Endothelial cell of umbilical vein (primary cell): ENCODE measurements at regions of chr5 and their contacts with region 1.

Region 1: DNA sequence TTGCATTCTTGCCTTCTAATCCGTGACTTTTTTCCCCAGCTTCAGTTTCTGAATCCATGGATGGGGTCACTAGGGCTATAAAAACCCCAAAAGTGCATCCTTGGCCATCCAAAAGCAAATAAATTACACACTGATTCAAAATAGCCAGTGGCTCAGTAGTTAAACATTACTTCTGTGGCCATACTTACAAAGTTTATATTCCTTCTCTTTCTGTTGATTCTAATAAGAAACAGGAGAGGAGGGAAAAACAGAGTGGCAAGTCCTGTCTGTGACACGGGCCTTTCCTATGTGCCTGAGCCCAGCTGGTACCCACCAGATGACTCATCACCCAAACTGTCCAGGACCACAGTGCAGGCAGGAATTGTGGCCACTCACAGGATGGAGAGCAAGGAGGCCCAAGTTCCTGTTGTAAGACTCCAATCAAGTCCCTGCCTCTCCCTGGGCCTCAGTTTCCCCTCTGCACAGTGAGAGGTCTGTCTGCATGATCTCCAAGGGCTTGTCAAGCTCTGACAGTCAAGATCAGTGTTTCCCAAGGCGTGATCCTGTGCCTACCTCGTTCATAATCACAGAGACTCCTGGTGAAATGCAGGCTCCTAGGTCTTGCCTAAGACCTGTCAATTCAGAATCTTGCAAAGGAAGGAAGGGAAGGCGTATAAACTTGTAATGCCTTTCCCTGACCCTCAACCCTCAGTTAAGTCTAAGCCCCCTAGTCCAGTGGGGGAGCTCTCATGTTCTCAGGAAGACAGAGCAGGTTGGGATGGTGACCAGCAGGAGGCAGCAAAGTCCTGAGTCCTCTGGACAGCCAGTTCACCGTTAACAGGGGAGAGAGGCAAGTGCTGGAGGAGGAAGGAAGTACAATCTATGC is 29.5 kb downstream of the TNIP1 start:
- DNase-seq: peak; percentile 81
- H3K4me3 ChIP-seq: no peak overlapping the region
- H3K27ac ChIP-seq: no peak overlapping the region
- H3K4me1 ChIP-seq: no peaks in the 10 kb centered on the region
- H3K27me3 ChIP-seq: no peaks in the 10 kb centered on the region
- CTCF ChIP-seq: peak; percentile 86 to 91
- POLR2A ChIP-seq: no peak

Region 2: DNA sequence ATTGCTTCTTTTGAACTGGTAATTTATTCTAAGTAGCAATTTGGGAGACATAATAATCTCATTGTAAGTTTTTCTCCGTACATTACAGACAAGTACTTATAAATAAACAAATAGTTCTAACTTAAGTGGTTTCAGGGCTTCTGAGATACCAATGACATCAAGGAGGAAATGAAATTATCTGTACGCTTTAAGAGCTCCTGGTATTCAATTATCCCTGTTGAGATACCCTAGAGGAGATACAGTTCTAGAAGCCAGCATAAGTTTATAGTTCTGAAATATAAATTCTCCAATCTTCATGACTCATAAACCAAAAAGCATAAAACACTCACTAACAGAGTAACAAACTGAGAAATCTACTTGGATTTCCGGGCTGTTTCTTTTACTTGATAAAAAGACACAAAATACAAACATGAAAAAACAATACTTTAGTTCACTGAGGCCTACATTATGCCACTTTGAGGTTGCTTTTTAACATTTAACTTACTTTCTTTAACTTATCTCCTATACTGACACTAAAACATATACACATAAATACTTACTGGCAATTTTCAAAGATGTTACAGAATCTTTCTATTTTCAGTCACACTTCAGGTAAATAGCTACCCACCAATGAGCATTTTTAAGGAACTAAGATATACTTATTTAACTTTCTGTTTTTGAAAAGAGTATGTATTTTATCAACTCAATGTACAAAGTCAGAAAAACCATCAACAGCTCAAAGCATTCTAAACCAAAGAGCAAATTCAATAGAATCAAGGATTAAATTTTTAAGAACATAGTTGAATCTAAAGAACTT is 300.0 kb before region 1 on chr5:
- CTCF ChIA-PET with region 1: no interaction called
- POLR2A ChIA-PET with region 1: no interaction called
- dilution Hi-C with region 1: no loop called
- intact Hi-C with region 1: no loop called
- DNase-seq: no peak
- H3K4me3 ChIP-seq: no peak overlapping the region
- H3K27ac ChIP-seq: no peak overlapping the region
- H3K4me1 ChIP-seq: peaks cover 5% of the 10 kb centered on the region
- H3K27me3 ChIP-seq: no peaks in the 10 kb centered on the region
- CTCF ChIP-seq: no peak
- POLR2A ChIP-seq: no peak

Region 3: GRCh38 chr5:151020304-151021110 is 30.8 kb before region 1 on chr5 and contains the start of gene GPX3:
- CTCF ChIA-PET with region 1: interaction called, 21 read pairs
- POLR2A ChIA-PET with region 1: no interaction called
- dilution Hi-C with region 1: no loop called
- intact Hi-C with region 1: no loop called
- DNase-seq: peak; percentile 69
- H3K4me3 ChIP-seq: peak within 1 kb of the TSS; percentile 48 to 60 (median 57)
- H3K27ac ChIP-seq: no peak within 1 kb of the TSS
- H3K4me1 ChIP-seq: peaks cover 24% of the 10 kb centered on the region
- H3K27me3 ChIP-seq: peaks cover 3 to 9% of the 10 kb centered on the region in 2 experiments
- CTCF ChIP-seq: no peak
- POLR2A ChIP-seq: no peak
- total RNA-seq, gene GPX3: 3.5 and 5.1 TPM in 2 replicates

Region 4: GRCh38 chr5:151063142-151063949 is 12.0 kb after region 1 on chr5:
- CTCF ChIA-PET with region 1: interaction called, 46 read pairs
- POLR2A ChIA-PET with region 1: no interaction called
- dilution Hi-C with region 1: no loop called
- intact Hi-C with region 1: no loop called
- DNase-seq: peak; percentile 83
- H3K4me3 ChIP-seq: no peak overlapping the region
- H3K27ac ChIP-seq: peak overlapping the region; percentile 86
- H3K4me1 ChIP-seq: peaks cover 27% of the 10 kb centered on the region
- H3K27me3 ChIP-seq: no peaks in the 10 kb centered on the region
- CTCF ChIP-seq: no peak
- POLR2A ChIP-seq: no peak

Region 5: GRCh38 chr5:151086905-151087360 is 35.6 kb after region 1 on chr5:
- CTCF ChIA-PET with region 1: interaction called, 30 read pairs
- POLR2A ChIA-PET with region 1: no interaction called
- dilution Hi-C with region 1: no loop called
- intact Hi-C with region 1: no loop called
- DNase-seq: no peak
- H3K4me3 ChIP-seq: no peak overlapping the region
- H3K27ac ChIP-seq: no peak overlapping the region
- H3K4me1 ChIP-seq: peaks cover 26% of the 10 kb centered on the region
- H3K27me3 ChIP-seq: no peaks in the 10 kb centered on the region
- CTCF ChIP-seq: no peak
- POLR2A ChIP-seq: no peak

Region 6: DNA sequence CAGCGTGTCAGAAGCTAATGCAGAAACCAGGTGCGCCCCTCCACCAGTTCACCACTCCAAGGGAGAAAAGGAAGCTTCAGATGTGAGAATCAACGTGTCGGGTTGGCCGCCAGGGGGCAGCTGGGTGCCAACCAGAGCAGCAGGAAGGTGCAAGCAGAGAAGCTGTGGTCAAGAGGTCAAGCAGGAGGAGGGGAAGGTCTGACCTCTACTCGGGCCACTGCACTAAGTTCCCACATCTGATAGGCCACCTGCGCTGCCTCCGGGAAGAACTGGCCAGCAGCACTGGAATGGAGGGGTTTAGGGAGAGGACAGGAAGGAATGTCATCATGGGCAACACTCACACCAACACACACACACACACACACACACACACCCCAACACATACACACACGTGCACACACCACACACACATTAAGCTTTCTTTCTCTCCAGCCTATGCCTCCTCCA is 74.9 kb after region 1 on chr5:
- CTCF ChIA-PET with region 1: interaction called, 17 read pairs
- POLR2A ChIA-PET with region 1: no interaction called
- dilution Hi-C with region 1: no loop called
- intact Hi-C with region 1: no loop called
- DNase-seq: peak; percentile 57
- H3K4me3 ChIP-seq: no peak overlapping the region
- H3K27ac ChIP-seq: no peak overlapping the region
- H3K4me1 ChIP-seq: no peaks in the 10 kb centered on the region
- H3K27me3 ChIP-seq: no peaks in the 10 kb centered on the region
- CTCF ChIP-seq: peak; percentile 69 to 86
- POLR2A ChIP-seq: no peak

Region 7: DNA sequence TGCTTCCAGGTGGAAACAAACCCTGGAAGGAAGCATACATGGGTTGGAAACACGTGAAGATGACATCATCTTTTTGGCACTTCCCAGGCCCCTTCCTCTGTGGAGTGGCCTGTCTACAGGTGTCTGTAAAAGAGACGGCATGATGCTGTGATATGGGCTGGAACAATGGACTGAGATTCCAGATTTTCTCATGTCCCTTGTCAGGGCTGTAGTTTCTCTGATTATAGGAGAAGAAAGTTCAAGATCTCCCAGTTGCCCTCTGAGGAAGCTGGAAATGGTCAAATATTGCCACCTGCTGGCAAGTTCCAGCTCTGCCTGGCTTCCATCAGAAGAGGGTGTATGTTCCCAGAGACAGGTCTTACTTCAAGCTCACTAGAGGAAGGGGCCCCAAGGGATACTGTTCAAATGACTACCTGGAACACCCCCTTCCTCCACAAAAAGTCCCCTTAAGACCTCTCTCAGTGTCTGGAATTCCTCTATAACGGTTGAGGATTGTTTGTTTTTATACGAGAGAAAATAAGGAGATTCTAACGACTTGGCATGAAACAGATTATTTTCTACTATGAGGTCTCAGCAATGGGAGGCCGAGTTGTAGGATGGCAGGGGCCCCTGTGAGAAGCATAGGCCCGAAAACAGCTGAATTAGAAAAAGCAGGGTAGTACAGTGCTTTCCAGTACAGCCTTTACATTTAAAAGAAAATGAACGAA is 113.5 kb after region 1 on chr5:
- CTCF ChIA-PET with region 1: interaction called, 48 read pairs
- POLR2A ChIA-PET with region 1: no interaction called
- dilution Hi-C with region 1: no loop called
- intact Hi-C with region 1: loop called (anchors 1 kb)
- DNase-seq: peak; percentile 91
- H3K4me3 ChIP-seq: no peak overlapping the region
- H3K27ac ChIP-seq: no peak overlapping the region
- H3K4me1 ChIP-seq: peaks cover 8% of the 10 kb centered on the region
- H3K27me3 ChIP-seq: peaks cover 0 to 1% of the 10 kb centered on the region in 2 experiments
- CTCF ChIP-seq: peak; percentile 79 to 90
- POLR2A ChIP-seq: no peak

Region 8: GRCh38 chr5:151183451-151184245 is 132.3 kb after region 1 on chr5:
- CTCF ChIA-PET with region 1: no interaction called
- POLR2A ChIA-PET with region 1: no interaction called
- dilution Hi-C with region 1: no loop called
- intact Hi-C with region 1: no loop called
- DNase-seq: peak; percentile 54
- H3K4me3 ChIP-seq: no peak overlapping the region
- H3K27ac ChIP-seq: no peak overlapping the region
- H3K4me1 ChIP-seq: no peaks in the 10 kb centered on the region
- H3K27me3 ChIP-seq: no peaks in the 10 kb centered on the region
- CTCF ChIP-seq: no peak
- POLR2A ChIP-seq: no peak

Region 9: DNA sequence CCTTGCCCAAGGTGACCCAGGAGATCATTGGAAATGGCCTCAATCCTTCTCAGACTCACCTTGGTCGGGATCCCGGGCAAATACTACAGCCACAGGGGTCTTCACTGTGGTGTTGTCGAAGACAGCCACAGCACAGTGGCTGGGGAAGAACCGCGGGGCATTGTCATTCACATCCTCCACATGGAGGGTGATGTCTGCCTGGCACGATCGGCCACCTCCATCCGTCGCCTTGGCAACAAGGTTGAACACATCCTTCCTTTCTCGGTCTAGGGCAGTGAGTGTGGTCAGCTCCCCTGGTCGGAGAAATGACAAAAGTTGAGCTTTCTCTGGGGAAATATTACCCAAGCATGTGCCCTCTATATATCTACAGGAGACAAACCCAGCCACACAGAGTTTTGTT is 483.1 kb after region 1 on chr5:
- CTCF ChIA-PET with region 1: no interaction called
- POLR2A ChIA-PET with region 1: no interaction called
- dilution Hi-C with region 1: no loop called
- intact Hi-C with region 1: no loop called
- DNase-seq: no peak
- H3K4me3 ChIP-seq: no peak overlapping the region
- H3K27ac ChIP-seq: no peak overlapping the region
- H3K4me1 ChIP-seq: no peaks in the 10 kb centered on the region
- H3K27me3 ChIP-seq: peaks cover 2 to 3% of the 10 kb centered on the region in 2 experiments
- CTCF ChIP-seq: no peak
- POLR2A ChIP-seq: no peak